Naive thymus-derived CD4-positive, alpha-beta T cell (primary cell): ENCODE measurements at regions of chr22 and their contacts with region 1.

Region 1: GRCh38 chr22:41940832-41941765 is 5.9 kb downstream of the CENPM start:
- DNase-seq: peak; percentile 72 to 89 (median 85)
- ATAC-seq: peak; percentile 74
- H3K4me3 ChIP-seq: peak overlapping the region; percentile 16
- H3K4me3 Mint-ChIP-seq: peak overlapping the region; percentile 57 to 91 (median 82)
- H3K27ac ChIP-seq: peak overlapping the region; percentile 92
- H3K27ac Mint-ChIP-seq: peak overlapping the region; percentile 96 to 100 (median 100)
- H3K4me1 ChIP-seq: peaks cover 20 to 31% of the 10 kb centered on the region in 2 donors
- H3K4me1 Mint-ChIP-seq: peaks cover 25 to 55% (median 31%) of the 10 kb centered on the region in 7 donors
- H3K27me3 ChIP-seq: no peaks in the 10 kb centered on the region
- H3K27me3 Mint-ChIP-seq: peaks cover 0 to 2% (median 0%) of the 10 kb centered on the region in 5 donors

Region 2: DNA sequence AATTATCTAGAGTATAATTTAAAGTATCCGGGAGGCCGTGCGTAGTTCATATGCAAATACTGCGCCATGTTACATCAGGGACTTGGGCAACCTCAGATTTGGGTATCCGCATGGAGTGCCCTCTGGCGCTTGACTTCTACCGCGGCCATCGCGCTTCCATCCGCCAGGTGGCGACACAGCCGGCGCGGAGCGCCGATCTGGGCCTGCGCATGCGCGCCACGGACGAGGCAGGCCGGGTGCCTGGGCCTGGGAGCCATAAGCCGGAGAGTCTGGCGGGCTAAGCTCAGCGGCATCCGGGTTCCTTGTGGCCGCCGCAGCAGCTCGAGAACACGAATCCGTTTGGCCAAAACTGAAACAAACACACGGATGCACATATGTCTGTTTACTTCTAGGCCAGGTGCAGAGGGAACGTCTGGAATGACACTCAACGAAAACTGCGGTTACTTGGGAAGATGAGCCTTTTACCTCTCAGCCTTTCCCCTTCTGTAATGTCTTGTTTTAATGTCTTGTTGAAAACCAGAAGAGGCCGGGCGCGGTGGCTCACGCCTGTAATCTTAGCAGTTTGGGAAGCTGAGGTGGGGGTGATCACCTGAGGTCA is 274.3 kb before region 1 on chr22:
- CTCF ChIA-PET with region 1: interaction called, 4 read pairs
- POLR2A ChIA-PET with region 1: interaction called, 10 read pairs
- intact Hi-C with region 1: loop called (anchors 1 kb)
- DNase-seq: peak; percentile 88 to 97 (median 95)
- ATAC-seq: peak; percentile 98
- H3K4me3 ChIP-seq: peak overlapping the region; percentile 44
- H3K4me3 Mint-ChIP-seq: peak overlapping the region; percentile 75 to 87 (median 82)
- H3K27ac ChIP-seq: peak overlapping the region; percentile 72
- H3K27ac Mint-ChIP-seq: peak overlapping the region; percentile 91 to 99 (median 97)
- H3K4me1 ChIP-seq: peaks cover 7% of the 10 kb centered on the region in 2 donors
- H3K4me1 Mint-ChIP-seq: peaks cover 0 to 25% (median 10%) of the 10 kb centered on the region in 7 donors
- H3K27me3 ChIP-seq: no peaks in the 10 kb centered on the region
- H3K27me3 Mint-ChIP-seq: no peaks in the 10 kb centered on the region

Region 3: DNA sequence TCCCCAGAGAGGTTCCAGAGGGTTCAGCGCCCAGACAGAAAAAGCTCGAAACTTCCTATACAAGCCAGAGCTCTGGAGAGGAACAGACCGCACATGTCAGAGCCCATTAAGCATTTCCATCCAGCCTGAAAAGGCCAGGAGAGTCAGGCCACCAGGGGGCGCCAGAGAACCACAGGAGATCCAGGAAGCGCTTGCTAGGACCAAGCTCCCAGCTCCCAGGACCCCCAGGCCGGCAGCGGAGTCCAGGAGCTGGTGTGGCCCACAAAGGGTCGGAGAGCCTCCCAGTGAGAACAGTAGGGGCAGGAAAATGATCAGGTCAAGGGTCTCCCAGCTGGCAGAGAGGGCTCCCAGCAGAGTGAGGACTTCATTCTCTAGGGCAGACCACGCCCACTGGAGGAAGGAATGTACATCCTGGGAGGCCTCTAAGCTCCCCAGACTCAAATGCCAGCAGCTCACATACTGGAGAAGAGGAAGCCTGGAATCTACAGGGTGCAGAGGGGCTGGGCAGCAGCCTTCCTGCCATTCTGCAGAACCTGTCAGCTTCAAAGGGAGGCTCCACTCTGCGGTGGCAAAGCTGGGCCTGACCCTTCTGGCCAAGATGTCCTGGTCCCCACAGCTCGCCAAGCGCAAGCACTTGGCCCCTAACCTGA is 243.8 kb before region 1 on chr22:
- CTCF ChIA-PET with region 1: interaction called, 52 read pairs
- POLR2A ChIA-PET with region 1: interaction called, 23 read pairs
- intact Hi-C with region 1: no loop called
- DNase-seq: peak; percentile 73 to 94 (median 84)
- ATAC-seq: peak; percentile 91
- H3K4me3 ChIP-seq: peak overlapping the region; percentile 44
- H3K4me3 Mint-ChIP-seq: peak overlapping the region; percentile 44 to 80 (median 68)
- H3K27ac ChIP-seq: peak overlapping the region; percentile 5
- H3K27ac Mint-ChIP-seq: peak overlapping the region; percentile 16 to 90 (median 85)
- H3K4me1 ChIP-seq: peaks cover 7 to 10% of the 10 kb centered on the region in 2 donors
- H3K4me1 Mint-ChIP-seq: peaks cover 10 to 16% (median 13%) of the 10 kb centered on the region in 7 donors
- H3K27me3 ChIP-seq: no peaks in the 10 kb centered on the region
- H3K27me3 Mint-ChIP-seq: peaks cover 0 to 3% (median 0%) of the 10 kb centered on the region in 5 donors

Region 4: DNA sequence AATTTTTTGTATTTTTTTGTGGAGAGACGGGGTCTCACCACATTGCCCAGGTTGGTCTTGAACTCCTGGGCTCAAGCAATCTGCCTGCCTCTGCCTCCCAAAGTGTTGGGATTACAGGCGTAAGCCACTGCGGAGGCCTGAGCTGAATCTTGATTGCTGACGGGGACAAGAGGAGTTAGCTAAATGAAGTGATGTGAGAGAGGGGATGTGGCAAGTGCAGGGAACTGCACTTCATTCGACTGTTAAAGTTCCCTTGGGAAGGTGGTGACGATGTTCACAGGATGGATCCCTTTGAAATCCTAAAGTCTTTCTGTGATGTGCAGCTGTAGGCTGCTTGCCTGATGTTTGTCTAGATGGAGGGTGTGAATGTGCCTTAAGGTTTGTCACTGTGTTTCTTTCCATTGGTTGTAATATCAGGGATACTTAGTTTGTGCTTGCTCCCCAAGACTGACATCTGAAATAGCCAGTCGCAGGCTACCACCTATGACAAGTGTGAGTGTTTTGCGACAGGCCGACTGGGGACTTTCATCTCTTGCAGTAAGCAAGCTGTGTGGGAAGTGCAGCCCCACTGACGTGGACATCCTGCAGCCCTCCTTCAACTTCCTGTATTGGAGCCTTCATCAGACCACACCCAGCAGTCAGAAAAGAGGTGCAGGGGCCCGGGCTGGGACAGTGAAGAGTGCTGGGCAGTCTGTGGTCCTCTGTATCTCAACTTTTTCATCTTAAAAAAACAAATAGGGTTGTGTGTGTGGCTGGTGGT is 160.2 kb before region 1 on chr22:
- CTCF ChIA-PET with region 1: interaction called, 7 read pairs
- POLR2A ChIA-PET with region 1: interaction called, 31 read pairs
- intact Hi-C with region 1: loop called (anchors 1 kb)
- DNase-seq: peak; percentile 64 to 99 (median 96)
- ATAC-seq: peak; percentile 97
- H3K4me3 ChIP-seq: peak overlapping the region; percentile 67
- H3K4me3 Mint-ChIP-seq: peak overlapping the region; percentile 77 to 93 (median 89)
- H3K27ac ChIP-seq: peak overlapping the region; percentile 88
- H3K27ac Mint-ChIP-seq: peak overlapping the region; percentile 98 to 100 (median 100)
- H3K4me1 ChIP-seq: peaks cover 19 to 25% of the 10 kb centered on the region in 2 donors
- H3K4me1 Mint-ChIP-seq: peaks cover 32 to 71% (median 51%) of the 10 kb centered on the region in 7 donors
- H3K27me3 ChIP-seq: no peaks in the 10 kb centered on the region
- H3K27me3 Mint-ChIP-seq: no peaks in the 10 kb centered on the region

Region 5: DNA sequence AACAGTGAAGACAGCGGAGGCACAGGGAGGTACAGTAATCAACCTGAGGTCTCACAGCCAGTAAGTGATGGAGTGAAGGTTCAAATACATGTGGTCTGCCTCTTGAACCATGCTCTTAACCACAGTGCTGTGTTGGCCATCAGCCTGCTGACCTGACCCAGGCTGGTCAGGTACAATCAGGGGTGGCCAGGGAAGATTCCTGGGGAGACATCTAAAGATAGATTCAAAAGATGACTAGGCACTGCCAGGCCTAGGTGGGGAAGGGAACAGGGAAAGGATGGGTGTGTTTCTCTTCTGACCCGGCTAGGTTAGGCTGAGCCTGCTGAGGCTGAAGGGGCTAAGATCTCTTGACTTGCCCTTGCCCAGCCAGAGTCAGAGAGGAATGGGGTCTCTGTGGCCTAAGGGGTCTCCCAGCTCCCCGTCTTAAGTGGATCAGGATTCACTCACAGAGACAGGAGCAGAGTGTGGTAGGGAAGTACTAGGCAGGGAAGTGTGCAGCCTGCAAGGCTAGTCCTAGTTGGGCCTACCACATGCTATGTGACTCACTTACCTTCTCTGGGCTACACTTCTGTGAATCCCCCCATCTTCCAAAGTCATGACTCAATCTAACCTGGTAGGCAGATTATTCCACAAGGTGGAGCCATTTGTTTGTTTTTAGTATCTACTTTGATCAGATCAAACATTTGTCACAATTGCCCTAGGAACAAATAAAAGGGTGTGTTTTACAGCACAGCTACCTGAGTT is 118.6 kb before region 1 on chr22:
- CTCF ChIA-PET with region 1: interaction called, 15 read pairs
- POLR2A ChIA-PET with region 1: interaction called, 17 read pairs
- intact Hi-C with region 1: loop called in 1 of 2 experiments (anchors 1 kb)
- DNase-seq: peak in 8 of 9 donors; percentile 30 to 78 (median 70)
- ATAC-seq: peak; percentile 87
- H3K4me3 ChIP-seq: no peak overlapping the region
- H3K4me3 Mint-ChIP-seq: no peak overlapping the region
- H3K27ac ChIP-seq: peak overlapping the region; percentile 4
- H3K27ac Mint-ChIP-seq: peak overlapping the region; percentile 35 to 90 (median 76)
- H3K4me1 ChIP-seq: no peaks in the 10 kb centered on the region
- H3K4me1 Mint-ChIP-seq: peaks cover 5 to 33% (median 15%) of the 10 kb centered on the region in 7 donors
- H3K27me3 ChIP-seq: no peaks in the 10 kb centered on the region
- H3K27me3 Mint-ChIP-seq: no peaks in the 10 kb centered on the region

Region 6: DNA sequence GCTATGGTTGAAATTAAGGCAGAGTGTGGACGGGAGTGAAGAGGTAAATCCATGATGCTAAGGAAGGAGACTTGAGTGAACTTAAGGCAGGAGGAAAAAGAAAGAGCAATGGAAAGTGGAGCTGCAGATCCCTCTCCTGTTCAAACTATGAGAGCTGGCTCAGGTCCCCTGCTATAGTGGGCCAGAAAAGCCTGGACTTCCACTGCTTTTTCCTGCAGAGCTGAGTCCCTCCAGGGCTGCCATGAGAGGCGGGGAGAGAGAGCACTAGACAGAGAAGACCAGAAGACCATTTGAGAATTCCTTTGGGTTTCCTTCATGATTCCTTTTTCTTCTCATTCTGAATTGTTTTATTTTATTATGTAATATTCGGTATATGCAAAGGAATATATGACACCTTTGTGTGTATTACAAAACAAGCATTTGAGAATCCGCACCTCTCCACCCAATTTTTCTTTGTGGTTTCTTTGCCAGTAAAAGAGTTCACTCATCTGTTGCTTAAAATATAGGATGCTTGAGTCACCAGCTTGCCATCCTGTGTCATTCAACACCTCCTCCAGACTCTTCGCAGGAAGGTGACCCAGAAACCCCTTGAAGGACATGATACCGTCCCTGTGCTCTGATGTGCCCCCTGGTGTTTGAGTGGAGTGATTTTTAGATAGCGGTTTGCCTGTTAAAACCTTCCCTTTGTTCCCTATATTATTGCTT is 83.8 kb before region 1 on chr22:
- CTCF ChIA-PET with region 1: interaction called, 5 read pairs
- POLR2A ChIA-PET with region 1: interaction called, 5 read pairs
- intact Hi-C with region 1: loop called (anchors 1 kb)
- DNase-seq: peak; percentile 27 to 76 (median 65)
- ATAC-seq: peak; percentile 87
- H3K4me3 ChIP-seq: no peak overlapping the region
- H3K4me3 Mint-ChIP-seq: peak overlapping the region; percentile 3 to 67 (median 36)
- H3K27ac ChIP-seq: no peak overlapping the region
- H3K27ac Mint-ChIP-seq: peak overlapping the region; percentile 62 to 91 (median 82)
- H3K4me1 ChIP-seq: peaks cover 17 to 26% of the 10 kb centered on the region in 2 donors
- H3K4me1 Mint-ChIP-seq: peaks cover 33 to 69% (median 54%) of the 10 kb centered on the region in 7 donors
- H3K27me3 ChIP-seq: no peaks in the 10 kb centered on the region
- H3K27me3 Mint-ChIP-seq: no peaks in the 10 kb centered on the region

Region 7: GRCh38 chr22:41925655-41926460 is 15.2 kb before region 1 on chr22:
- CTCF ChIA-PET with region 1: interaction called, 20 read pairs
- POLR2A ChIA-PET with region 1: interaction called, 58 read pairs
- intact Hi-C with region 1: loop called (anchors 1 to 2 kb)
- DNase-seq: peak; percentile 52 to 88 (median 69)
- ATAC-seq: peak; percentile 89
- H3K4me3 ChIP-seq: peak overlapping the region; percentile 46
- H3K4me3 Mint-ChIP-seq: peak overlapping the region; percentile 67 to 86 (median 77)
- H3K27ac ChIP-seq: peak overlapping the region; percentile 8
- H3K27ac Mint-ChIP-seq: peak overlapping the region in 7 of 9 donors; percentile 32 to 71 (median 62)
- H3K4me1 ChIP-seq: no peaks in the 10 kb centered on the region
- H3K4me1 Mint-ChIP-seq: peaks cover 4 to 18% (median 12%) of the 10 kb centered on the region in 7 donors
- H3K27me3 ChIP-seq: no peaks in the 10 kb centered on the region
- H3K27me3 Mint-ChIP-seq: peaks cover 0 to 26% (median 5%) of the 10 kb centered on the region in 5 donors

Region 8: GRCh38 chr22:41992496-41992895 is 51.4 kb after region 1 on chr22:
- CTCF ChIA-PET with region 1: no interaction called
- POLR2A ChIA-PET with region 1: no interaction called
- intact Hi-C with region 1: no loop called
- DNase-seq: no peak
- ATAC-seq: no peak
- H3K4me3 ChIP-seq: no peak overlapping the region
- H3K4me3 Mint-ChIP-seq: no peak overlapping the region
- H3K27ac ChIP-seq: no peak overlapping the region
- H3K27ac Mint-ChIP-seq: no peak overlapping the region
- H3K4me1 ChIP-seq: no peaks in the 10 kb centered on the region
- H3K4me1 Mint-ChIP-seq: peaks cover 0 to 4% (median 2%) of the 10 kb centered on the region in 7 donors
- H3K27me3 ChIP-seq: no peaks in the 10 kb centered on the region
- H3K27me3 Mint-ChIP-seq: peaks cover 0 to 9% (median 0%) of the 10 kb centered on the region in 5 donors